ENCODE measurements at regions of chr2 and their contacts with region 1.

Region 1: DNA sequence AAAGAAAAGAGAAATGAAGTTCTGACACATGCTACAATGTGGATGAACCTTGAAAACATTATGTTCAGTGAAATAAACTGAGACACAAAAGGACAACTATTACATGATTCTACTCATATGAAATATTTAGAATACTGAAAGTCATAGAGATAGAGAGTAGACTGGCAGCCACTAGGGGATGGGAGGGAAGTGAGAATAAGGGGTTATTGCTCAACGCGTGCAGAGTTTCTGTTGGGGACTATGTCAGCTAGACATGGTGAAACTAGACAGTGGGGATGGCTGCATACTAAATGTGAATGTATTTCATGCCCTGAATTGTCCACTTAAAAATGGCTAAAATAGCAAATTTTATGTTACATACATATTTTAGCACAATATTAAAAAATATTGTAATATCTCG is 108.7 kb upstream of the ATL2 start:
- DNase-seq: no peak
- ATAC-seq: peak; percentile 59 to 83 (median 73)
- H3K4me3 ChIP-seq: no peak overlapping the region
- H3K27ac ChIP-seq: peak overlapping the region; percentile 62
- H3K4me1 ChIP-seq: peaks cover 40% of the 10 kb centered on the region
- H3K27me3 ChIP-seq: no peaks in the 10 kb centered on the region
- CTCF ChIP-seq: peak; percentile 7

Region 2: GRCh38 chr2:38523728-38524437 is 38.1 kb after region 1 on chr2:
- intact Hi-C with region 1: loop called in 1 of 2 experiments (anchors 5 kb)
- DNase-seq: no peak
- ATAC-seq: peak in 1 of 4 donors; percentile 55
- H3K4me3 ChIP-seq: no peak overlapping the region
- H3K27ac ChIP-seq: peak overlapping the region; percentile 62
- H3K4me1 ChIP-seq: peaks cover 28% of the 10 kb centered on the region
- H3K27me3 ChIP-seq: no peaks in the 10 kb centered on the region
- CTCF ChIP-seq: peak; percentile 21

Measured in psoas muscle (tissue), 8 donors.